HepG2 (cell line): ENCODE measurements at regions of chr6 and their contacts with region 1.

Region 1: GRCh38 chr6:75526502-75527127 is 33.0 kb upstream of the FILIP1 start:
- DNase-seq: peak; percentile 56
- ATAC-seq: peak; percentile 76
- H3K4me3 ChIP-seq: no peak overlapping the region
- H3K27ac ChIP-seq: no peak overlapping the region
- H3K4me1 ChIP-seq: peaks cover 12% of the 10 kb centered on the region
- H3K27me3 ChIP-seq: no peaks in the 10 kb centered on the region
- CTCF ChIP-seq: peak; percentile 76
- EP300 ChIP-seq: no peak
- POLR2A ChIP-seq: no peak
- RAD21 ChIP-seq: peak; percentile 65

Region 2: GRCh38 chr6:75266716-75267291 is 259.8 kb before region 1 on chr6:
- CTCF ChIA-PET with region 1: interaction called, 14 read pairs
- POLR2A ChIA-PET with region 1: no interaction called
- in situ Hi-C with region 1: no loop called
- intact Hi-C with region 1: loop called (anchors 1 kb)
- DNase-seq: peak; percentile 42
- ATAC-seq: peak; percentile 77
- H3K4me3 ChIP-seq: no peak overlapping the region
- H3K27ac ChIP-seq: no peak overlapping the region
- H3K4me1 ChIP-seq: no peaks in the 10 kb centered on the region
- H3K27me3 ChIP-seq: no peaks in the 10 kb centered on the region
- CTCF ChIP-seq: peak; percentile 63
- EP300 ChIP-seq: no peak
- POLR2A ChIP-seq: no peak
- RAD21 ChIP-seq: peak; percentile 26; the same call in 1 of the 2 replicates

Region 3: DNA sequence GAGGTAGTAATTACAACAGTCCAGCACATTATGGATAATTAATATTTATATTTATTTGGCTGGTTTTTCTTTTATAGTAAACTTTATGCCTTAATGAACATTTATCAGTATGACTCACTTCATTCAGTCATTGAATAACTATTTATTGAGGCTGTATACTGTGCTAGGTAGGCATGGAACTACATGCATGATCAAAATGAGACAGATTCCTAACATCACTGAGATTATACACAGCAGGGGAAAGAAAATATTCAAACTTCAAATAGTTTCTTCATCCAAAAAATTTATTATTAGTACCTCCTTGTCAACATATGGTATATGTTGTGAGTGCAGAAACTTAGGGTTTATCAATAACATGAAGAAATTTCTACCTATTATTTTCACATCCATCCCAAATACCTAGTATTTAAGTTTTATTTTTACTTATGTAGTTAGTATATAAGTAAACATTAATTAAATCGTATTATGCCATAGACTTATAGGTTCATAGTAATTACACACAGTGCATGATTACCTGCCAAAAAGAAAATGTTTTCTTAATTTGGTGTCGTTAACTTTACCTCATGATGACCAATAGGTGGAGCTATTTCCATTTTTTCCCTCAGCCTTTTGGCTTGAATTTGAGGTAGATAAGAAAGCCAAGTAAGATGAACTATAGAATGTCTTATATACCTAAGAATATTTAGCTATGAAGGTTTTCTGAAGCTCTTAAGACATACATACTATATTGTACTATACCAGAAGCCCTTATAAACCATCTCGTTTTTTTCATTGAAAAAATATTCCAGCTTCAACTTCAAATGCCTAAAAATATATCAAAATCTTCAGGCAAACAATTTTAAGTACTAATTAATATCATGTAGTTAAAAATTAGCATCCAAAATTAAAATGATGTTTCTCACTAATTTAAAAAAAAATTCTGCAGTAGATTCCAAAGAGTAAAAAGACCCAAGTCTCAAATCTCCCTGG is 229.5 kb before region 1 on chr6:
- CTCF ChIA-PET with region 1: interaction called, 19 read pairs
- POLR2A ChIA-PET with region 1: no interaction called
- in situ Hi-C with region 1: no loop called
- intact Hi-C with region 1: loop called (anchors 1 kb)
- DNase-seq: peak; percentile 57
- ATAC-seq: peak; percentile 56
- H3K4me3 ChIP-seq: no peak overlapping the region
- H3K27ac ChIP-seq: no peak overlapping the region
- H3K4me1 ChIP-seq: no peaks in the 10 kb centered on the region
- H3K27me3 ChIP-seq: no peaks in the 10 kb centered on the region
- CTCF ChIP-seq: peak; percentile 72
- EP300 ChIP-seq: no peak
- POLR2A ChIP-seq: no peak
- RAD21 ChIP-seq: peak; percentile 28; the same call in 1 of the 2 replicates

Region 4: DNA sequence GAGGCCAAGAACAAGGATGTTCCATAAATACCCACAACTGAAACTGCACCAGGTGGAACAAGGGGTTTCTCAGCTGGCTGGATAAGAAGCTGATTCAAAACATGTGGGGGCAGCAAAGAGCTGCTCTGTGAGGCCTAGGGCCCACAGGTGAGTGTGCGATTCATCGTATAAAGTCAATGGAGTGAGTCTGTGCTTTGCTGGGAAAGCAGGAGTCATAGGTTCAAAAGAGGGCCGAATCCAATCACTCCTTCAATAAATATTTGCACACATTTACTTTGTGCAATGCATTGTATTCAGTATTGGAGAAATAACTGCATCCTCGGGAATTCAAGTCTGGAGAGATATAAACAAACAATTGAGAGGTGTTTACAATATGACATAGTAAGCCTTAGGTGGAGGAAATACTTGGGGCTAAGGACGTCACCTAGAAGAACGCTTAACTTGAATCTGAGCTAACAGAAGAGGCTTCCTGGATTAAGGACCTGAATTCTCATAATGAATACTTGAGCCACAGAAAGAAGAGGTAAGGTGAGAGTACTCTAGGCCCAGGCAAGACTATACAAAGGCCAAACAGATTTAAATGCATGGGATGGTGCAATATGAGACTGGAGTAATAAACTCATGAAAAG is 158.3 kb before region 1 on chr6:
- CTCF ChIA-PET with region 1: interaction called, 15 read pairs
- POLR2A ChIA-PET with region 1: no interaction called
- in situ Hi-C with region 1: loop called (anchors 5 kb)
- intact Hi-C with region 1: loop called (anchors 1 kb)
- DNase-seq: peak; percentile 44
- ATAC-seq: peak; percentile 98
- H3K4me3 ChIP-seq: no peak overlapping the region
- H3K27ac ChIP-seq: no peak overlapping the region
- H3K4me1 ChIP-seq: no peaks in the 10 kb centered on the region
- H3K27me3 ChIP-seq: no peaks in the 10 kb centered on the region
- CTCF ChIP-seq: peak; percentile 76
- EP300 ChIP-seq: no peak
- POLR2A ChIP-seq: no peak
- RAD21 ChIP-seq: peak; percentile 67

Region 5: DNA sequence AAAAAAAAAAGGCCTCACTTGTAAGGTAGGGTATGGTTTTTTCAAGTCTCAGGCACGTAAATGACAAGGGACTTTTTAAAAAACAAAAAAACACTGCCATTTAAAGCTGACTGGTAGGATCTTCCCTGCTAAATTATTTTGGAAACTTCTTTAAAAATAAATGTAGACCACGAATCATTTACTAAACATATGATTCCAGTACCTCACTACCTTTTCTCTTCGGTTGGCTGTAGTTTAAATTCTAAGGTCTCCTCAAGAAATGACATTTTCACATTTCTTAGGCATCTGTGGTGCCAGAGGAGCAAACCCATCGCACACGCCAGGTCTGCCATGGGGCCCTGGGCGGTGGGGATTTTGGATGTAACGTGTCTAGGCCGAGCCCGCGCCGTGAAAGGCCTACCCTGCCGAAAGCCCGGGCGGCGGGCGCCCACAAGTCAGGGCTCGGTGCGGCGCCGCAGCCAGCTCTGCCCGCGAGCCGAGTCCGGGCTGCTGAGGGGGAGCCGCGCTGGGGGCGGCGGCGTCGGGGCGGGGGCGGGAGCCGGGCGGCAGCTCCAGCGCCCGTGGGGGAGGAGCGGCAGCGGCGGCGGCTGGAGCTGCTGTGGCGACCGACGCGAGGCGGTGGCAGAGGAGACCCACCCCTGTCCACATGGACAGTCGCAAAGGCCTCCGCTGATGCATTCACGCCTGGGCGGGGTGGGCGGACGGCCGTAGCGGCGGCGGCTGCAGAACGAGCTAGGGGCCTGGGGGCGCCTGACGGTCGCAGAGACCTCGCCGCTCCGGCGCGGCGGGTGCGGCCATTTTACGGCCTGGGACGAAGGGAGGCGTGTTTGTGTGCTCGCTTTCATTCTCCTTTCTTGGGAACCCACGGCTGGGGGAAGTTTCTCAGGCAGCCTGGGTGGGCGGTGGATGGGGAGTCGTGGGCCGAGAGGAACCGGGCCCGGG is 75.0 kb after region 1 on chr6 and contains the start of gene SENP6:
- CTCF ChIA-PET with region 1: no interaction called
- POLR2A ChIA-PET with region 1: interaction called, 3 read pairs
- in situ Hi-C with region 1: no loop called
- intact Hi-C with region 1: loop called (anchors 2 kb)
- DNase-seq: peak; percentile 72
- ATAC-seq: peak; percentile 95
- H3K4me3 ChIP-seq: peak within 1 kb of the TSS; percentile 83 to 96 (median 90)
- H3K27ac ChIP-seq: peak within 1 kb of the TSS; percentile 95
- H3K4me1 ChIP-seq: peaks cover 39% of the 10 kb centered on the region
- H3K27me3 ChIP-seq: no peaks in the 10 kb centered on the region; a peak in 1 of 5 replicates
- CTCF ChIP-seq: 0 out of 2 replicates have a peak, but pooled peaks have one; percentile 9
- EP300 ChIP-seq: peak in 1 of 2 experiments; percentile 14; a peak in 1 of 4 replicates
- POLR2A ChIP-seq: peak; percentile 89 to 95
- RAD21 ChIP-seq: peak; percentile 12; the same call in 1 of the 2 replicates
- total RNA-seq, gene SENP6: 45.2 and 50.1 TPM in 2 replicates